ENCODE measurements at regions of chr1 and their contacts with region 1.

Region 1: DNA sequence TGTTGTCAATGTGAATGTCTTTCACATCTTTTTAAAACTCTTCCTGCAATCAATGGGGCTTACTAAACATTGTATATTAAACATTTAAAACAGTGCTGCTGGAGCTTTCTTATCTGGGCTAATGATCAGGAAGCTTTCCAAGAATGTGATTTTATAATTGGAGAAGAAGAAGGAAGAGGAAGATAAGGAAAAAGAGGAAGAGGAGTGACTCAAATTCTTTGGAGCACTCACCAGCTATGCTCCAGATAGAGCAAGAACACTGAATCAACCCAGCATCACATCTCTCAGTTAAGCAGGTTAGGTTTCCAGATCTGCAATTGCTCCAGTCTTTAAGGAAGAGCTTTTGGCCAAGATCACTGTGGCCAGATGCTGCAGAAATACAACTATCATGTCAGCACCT is 1.4 kb upstream of the SPRR2E start:
- DNase-seq: no peak
- ATAC-seq: no peak
- H3K4me3 ChIP-seq: no peak overlapping the region
- H3K4me3 Mint-ChIP-seq: no peak overlapping the region
- H3K27ac ChIP-seq: no peak overlapping the region
- H3K27ac Mint-ChIP-seq: no peak overlapping the region
- H3K4me1 ChIP-seq: no peaks in the 10 kb centered on the region
- H3K4me1 Mint-ChIP-seq: no peaks in the 10 kb centered on the region
- H3K27me3 ChIP-seq: peaks cover 2% of the 10 kb centered on the region
- H3K27me3 Mint-ChIP-seq: peaks cover 8 to 17% of the 10 kb centered on the region in 2 donors
- CTCF ChIP-seq: no peak

Region 2: GRCh38 chr1:152502496-152503180 is 593.1 kb before region 1 on chr1:
- intact Hi-C with region 1: no loop called
- DNase-seq: no peak
- ATAC-seq: no peak
- H3K4me3 ChIP-seq: no peak overlapping the region
- H3K4me3 Mint-ChIP-seq: no peak overlapping the region
- H3K27ac ChIP-seq: no peak overlapping the region
- H3K27ac Mint-ChIP-seq: no peak overlapping the region
- H3K4me1 ChIP-seq: no peaks in the 10 kb centered on the region
- H3K4me1 Mint-ChIP-seq: no peaks in the 10 kb centered on the region
- H3K27me3 ChIP-seq: no peaks in the 10 kb centered on the region
- H3K27me3 Mint-ChIP-seq: peaks cover 4 to 8% of the 10 kb centered on the region in 2 donors
- CTCF ChIP-seq: no peak

Region 3: DNA sequence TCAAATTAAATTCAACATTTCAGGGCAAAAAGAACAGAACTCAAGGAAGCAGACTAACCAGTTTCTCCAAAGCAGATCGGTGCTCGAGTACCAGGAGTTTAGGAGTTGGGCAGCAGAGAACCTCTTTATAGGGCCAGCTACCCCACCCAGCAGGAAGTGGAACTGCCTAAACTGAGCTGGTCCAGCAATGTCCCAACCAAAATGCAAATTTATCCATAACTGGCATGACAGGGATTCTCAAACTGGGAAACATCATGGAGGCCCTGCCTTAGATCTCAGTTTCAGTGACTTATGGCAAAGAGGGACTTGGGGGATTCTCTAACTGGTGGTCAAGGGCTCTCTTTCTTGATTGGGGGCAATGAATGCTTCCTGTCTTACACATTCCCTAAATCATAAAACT is 24.3 kb before region 1 on chr1 and contains the start of gene SPRR2B:
- intact Hi-C with region 1: loop called (anchors 1 kb)
- DNase-seq: no peak
- ATAC-seq: no peak
- H3K4me3 ChIP-seq: no peak within 1 kb of the TSS
- H3K4me3 Mint-ChIP-seq: no peak within 1 kb of the TSS
- H3K27ac ChIP-seq: no peak within 1 kb of the TSS
- H3K27ac Mint-ChIP-seq: no peak within 1 kb of the TSS
- H3K4me1 ChIP-seq: no peaks in the 10 kb centered on the region
- H3K4me1 Mint-ChIP-seq: no peaks in the 10 kb centered on the region
- H3K27me3 ChIP-seq: peaks cover 2% of the 10 kb centered on the region
- H3K27me3 Mint-ChIP-seq: peaks cover 6 to 8% of the 10 kb centered on the region in 2 donors
- CTCF ChIP-seq: no peak
- total RNA-seq, gene SPRR2B: not detected